Esophagus muscularis mucosa (tissue), 4 donors: ENCODE measurements at regions of chr12 and their contacts with region 1.

Region 1: GRCh38 chr12:49088190-49088931 is 6.2 kb downstream of the DHH start:
- DNase-seq: no peak
- H3K4me3 ChIP-seq: peak overlapping the region; percentile 20 to 34 (median 20)
- H3K27ac ChIP-seq: no peak overlapping the region
- H3K4me1 ChIP-seq: peaks cover 42 to 62% (median 57%) of the 10 kb centered on the region in 4 donors
- H3K27me3 ChIP-seq: peaks cover 0 to 50% (median 38%) of the 10 kb centered on the region in 4 donors
- CTCF ChIP-seq: peak; percentile 85 to 98 (median 88)
- EP300 ChIP-seq: no peak
- POLR2A ChIP-seq: no peak

Region 2: DNA sequence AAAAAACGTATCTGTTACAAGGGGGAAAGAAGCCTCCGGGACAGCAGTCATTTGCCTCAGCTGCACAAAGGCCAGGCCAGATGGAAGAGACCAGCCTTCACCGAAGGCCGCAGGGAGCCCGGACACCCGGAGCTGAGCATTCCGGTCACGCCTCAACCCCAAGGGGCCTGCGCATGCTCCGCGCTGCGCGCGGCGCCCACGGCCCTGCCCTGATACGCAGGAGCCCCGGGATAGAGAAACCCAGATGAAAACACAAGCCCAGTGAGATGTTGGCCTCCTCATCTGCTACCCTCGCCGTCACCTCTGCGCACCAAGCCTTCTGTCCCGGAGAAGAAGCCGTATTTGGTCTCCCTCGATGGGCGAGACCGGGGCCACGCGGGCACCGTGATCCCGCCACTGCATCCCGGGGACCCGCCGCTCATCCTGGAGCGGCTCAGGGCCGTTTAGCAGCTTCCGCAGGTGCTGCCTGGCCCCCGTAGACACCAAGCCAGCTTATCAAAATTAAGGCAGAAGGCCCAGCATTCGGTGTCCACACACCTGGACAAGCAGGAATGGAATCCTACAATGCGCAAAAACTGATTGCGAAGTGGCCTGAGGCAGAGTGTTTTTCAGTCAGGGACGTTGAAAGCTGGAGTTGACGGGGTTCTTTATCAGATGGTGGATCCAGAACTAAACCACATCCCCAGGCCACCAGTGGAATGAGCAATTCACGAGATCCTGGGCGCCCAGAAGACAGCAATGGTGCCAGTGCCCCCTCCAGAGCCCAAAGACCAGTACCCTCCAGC is 560.3 kb before region 1 on chr12:
- intact Hi-C with region 1: no loop called
- DNase-seq: no peak
- H3K4me3 ChIP-seq: no peak overlapping the region
- H3K27ac ChIP-seq: no peak overlapping the region
- H3K4me1 ChIP-seq: no peaks in the 10 kb centered on the region
- H3K27me3 ChIP-seq: no peaks in the 10 kb centered on the region
- CTCF ChIP-seq: no peak
- EP300 ChIP-seq: no peak
- POLR2A ChIP-seq: no peak

Region 3: GRCh38 chr12:49121047-49121696 is 32.8 kb after region 1 on chr12:
- intact Hi-C with region 1: loop called (anchors 5 kb)
- DNase-seq: no peak
- H3K4me3 ChIP-seq: no peak overlapping the region
- H3K27ac ChIP-seq: no peak overlapping the region
- H3K4me1 ChIP-seq: no peaks in the 10 kb centered on the region
- H3K27me3 ChIP-seq: no peaks in the 10 kb centered on the region
- CTCF ChIP-seq: peak; percentile 55 to 66 (median 57)
- EP300 ChIP-seq: no peak
- POLR2A ChIP-seq: no peak

Region 4: DNA sequence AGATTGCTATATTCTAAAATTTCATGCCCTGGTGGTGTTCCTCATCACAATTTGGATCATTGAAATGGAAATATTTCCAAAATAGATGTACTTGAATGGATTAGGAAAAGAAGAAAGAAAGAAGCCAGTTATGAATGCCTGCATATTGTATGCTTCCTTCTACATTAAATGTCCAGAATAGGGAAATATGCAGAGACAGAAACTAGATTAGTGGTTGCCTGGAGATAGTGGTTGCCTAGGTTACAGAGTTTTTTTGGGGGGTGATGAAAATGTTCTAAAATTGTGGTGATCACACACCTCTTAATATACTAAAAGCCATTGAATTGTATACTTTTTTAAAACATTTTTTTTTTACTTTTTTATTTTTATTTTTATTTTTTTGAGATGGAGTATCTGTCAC is 82.6 kb after region 1 on chr12:
- intact Hi-C with region 1: no loop called
- DNase-seq: no peak
- H3K4me3 ChIP-seq: no peak overlapping the region
- H3K27ac ChIP-seq: no peak overlapping the region
- H3K4me1 ChIP-seq: no peaks in the 10 kb centered on the region
- H3K27me3 ChIP-seq: no peaks in the 10 kb centered on the region
- CTCF ChIP-seq: no peak
- EP300 ChIP-seq: no peak
- POLR2A ChIP-seq: no peak